H1 (cell line): ENCODE measurements at regions of chr2 and their contacts with region 1.

Region 1: DNA sequence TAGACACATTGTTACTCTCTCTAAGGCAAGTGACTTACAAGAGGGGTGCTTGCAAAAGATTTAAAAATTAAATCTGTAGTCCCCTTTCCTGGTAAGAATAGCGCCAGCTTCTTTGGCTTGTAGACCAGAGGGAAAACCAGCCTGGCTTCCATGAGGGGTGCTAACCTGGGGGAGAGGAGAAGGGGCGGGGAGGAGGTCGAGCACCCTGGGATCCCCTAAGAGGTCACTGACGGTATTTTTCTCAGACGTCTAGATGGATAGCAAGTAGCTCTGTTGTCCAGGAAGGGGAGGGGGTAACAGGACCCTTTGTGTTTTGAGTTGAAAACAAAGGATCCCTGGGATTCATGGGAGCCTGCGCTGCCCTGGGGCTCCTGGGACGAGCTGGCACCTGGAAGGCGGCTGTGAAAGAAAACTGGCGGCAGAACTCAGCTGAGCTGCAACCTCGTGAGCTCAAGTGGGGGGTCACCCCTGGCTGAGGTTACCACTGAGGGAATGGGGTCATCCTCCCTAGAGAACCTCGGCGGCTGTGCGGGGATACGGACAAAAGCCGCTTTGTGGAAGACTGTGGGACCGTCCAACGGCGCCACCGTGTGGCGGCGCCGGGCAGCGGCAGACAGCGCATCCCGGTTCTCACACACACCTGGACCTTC is 37.8 kb upstream of the MRPL19 start:
- DNase-seq: peak; percentile 66 to 89
- H3K4me3 ChIP-seq: peak overlapping the region; percentile 21 to 57 (median 44); a peak in 5 of 8 replicates
- H3K27ac ChIP-seq: no peak overlapping the region
- H3K4me1 ChIP-seq: peaks cover 0 to 4% (median 2%) of the 10 kb centered on the region in 4 experiments; a peak in 4 of 7 replicates
- H3K27me3 ChIP-seq: no peaks in the 10 kb centered on the region; a peak in 2 of 7 replicates
- CTCF ChIP-seq: peak; percentile 90 to 94 (median 92)
- EP300 ChIP-seq: no peak
- POLR2A ChIP-seq: no peak
- RAD21 ChIP-seq: peak; percentile 91 to 93

Region 2: GRCh38 chr2:75157430-75157829 is 451.4 kb before region 1 on chr2:
- CTCF ChIA-PET with region 1: interaction called, 10 read pairs
- POLR2A ChIA-PET with region 1: no interaction called
- DNase-seq: no peak
- H3K4me3 ChIP-seq: no peak overlapping the region
- H3K27ac ChIP-seq: no peak overlapping the region
- H3K4me1 ChIP-seq: peaks cover 4 to 10% (median 4%) of the 10 kb centered on the region in 4 experiments; a peak in 6 of 7 replicates
- H3K27me3 ChIP-seq: no peaks in the 10 kb centered on the region
- CTCF ChIP-seq: peak in 2 of 3 experiments; percentile 30 to 41; a peak in 2 of 4 replicates
- EP300 ChIP-seq: no peak
- POLR2A ChIP-seq: no peak
- RAD21 ChIP-seq: peak; percentile 61 to 64

Region 3: DNA sequence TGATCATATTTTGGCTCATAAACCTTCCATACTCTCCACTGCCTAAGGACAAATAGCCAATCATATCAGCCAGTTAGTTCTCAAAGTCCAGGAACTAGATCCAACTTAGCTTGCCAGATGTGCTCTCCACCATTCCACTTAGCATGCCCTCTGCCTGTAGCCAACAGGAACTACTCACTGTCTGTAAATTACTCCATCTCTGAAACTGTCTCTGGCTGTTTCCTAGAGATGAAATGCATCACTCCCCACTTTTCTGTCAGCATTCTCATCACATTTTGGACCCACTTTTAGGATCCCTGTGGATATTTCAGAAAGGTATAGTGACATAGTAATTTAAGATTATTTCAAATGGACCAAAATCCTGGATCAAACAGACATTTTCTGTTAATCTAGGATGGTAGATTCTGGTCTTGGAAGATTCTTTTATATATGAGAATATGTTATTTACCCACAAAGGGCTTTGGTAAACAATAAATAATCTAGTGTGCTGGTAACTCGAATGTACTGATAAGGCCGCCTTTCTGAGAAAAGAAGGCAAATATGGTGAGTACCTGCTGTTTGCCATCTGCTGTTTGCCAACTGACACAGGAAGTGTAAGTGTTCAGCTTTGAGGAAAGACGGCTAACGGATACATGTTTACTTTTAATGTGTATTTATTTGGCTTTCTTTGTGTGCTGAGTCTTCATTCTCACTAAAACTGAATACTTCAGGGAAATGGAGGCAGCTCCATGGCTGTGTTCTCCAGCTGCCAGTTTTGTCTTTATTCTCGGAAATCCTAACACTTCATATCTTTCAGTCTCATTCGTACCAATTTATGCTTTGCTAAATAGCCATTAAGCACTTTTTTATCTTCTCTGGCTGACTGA is 127.6 kb before region 1 on chr2:
- CTCF ChIA-PET with region 1: interaction called, 11 read pairs
- POLR2A ChIA-PET with region 1: interaction called, 3 read pairs
- DNase-seq: no peak
- H3K4me3 ChIP-seq: no peak overlapping the region
- H3K27ac ChIP-seq: no peak overlapping the region
- H3K4me1 ChIP-seq: peaks cover 0 to 4% (median 0%) of the 10 kb centered on the region in 4 experiments; a peak in 1 of 7 replicates
- H3K27me3 ChIP-seq: no peaks in the 10 kb centered on the region
- CTCF ChIP-seq: peak in 2 of 3 experiments; percentile 33 to 69; a peak in 3 of 4 replicates
- EP300 ChIP-seq: no peak
- POLR2A ChIP-seq: no peak
- RAD21 ChIP-seq: peak; percentile 20 to 47; a peak in 3 of 4 replicates

Region 4: DNA sequence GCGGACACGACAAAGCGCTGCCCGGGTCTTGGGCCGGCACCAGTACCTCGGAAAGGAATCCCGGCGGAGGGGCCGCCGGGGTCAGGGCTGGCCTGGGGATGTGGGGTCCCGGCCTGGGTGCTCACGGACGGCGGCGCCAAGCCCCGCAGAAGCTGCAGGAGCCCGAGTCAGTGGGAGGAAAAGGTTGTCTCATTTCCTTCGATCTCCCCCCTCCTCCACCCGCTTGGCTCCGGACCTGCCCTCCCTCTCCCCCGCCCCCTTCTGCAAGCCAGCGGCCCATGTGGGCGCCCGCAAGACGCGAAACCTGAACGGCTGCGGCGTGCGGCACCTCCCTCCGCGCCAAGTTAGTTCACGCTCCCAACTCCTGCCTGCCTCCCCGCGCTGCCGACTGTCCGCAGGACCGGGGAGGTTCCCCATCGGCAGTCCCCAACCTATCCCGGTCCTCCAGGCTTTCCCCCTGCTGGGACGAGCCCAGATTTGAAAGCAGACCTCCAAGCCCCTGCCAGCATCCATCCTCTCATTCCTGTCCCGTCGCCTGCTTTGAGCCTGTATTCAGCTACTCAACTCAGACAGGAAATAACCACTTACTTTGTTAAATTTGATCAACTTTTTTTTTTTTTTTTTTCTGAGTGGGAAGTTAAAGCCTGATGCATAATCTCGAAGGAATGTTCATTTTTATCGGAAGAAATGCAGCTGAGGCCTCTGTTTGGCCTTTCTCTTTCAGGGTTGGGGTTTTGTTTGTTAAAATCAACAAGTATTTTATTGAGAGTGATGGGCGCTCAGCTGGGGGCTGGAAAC is 47.8 kb before region 1 on chr2 and contains the start of gene EVA1A:
- CTCF ChIA-PET with region 1: interaction called, 17 read pairs
- POLR2A ChIA-PET with region 1: interaction called, 3 read pairs
- DNase-seq: peak in 1 of 2 experiments; percentile 44
- H3K4me3 ChIP-seq: peak within 1 kb of the TSS; percentile 54 to 84 (median 71)
- H3K27ac ChIP-seq: no peak within 1 kb of the TSS
- H3K4me1 ChIP-seq: peaks cover 0 to 5% (median 2%) of the 10 kb centered on the region in 4 experiments; a peak in 4 of 7 replicates
- H3K27me3 ChIP-seq: peaks cover 0 to 25% (median 11%) of the 10 kb centered on the region in 4 experiments; a peak in 5 of 7 replicates
- CTCF ChIP-seq: no peak
- EP300 ChIP-seq: no peak
- POLR2A ChIP-seq: no peak
- RAD21 ChIP-seq: no peak
- total RNA-seq, gene EVA1A: 1.2 and 4.3 TPM in 2 replicates

Region 5: GRCh38 chr2:75579186-75579585 is 29.6 kb before region 1 on chr2:
- CTCF ChIA-PET with region 1: interaction called, 18 read pairs
- POLR2A ChIA-PET with region 1: no interaction called
- DNase-seq: no peak
- H3K4me3 ChIP-seq: no peak overlapping the region
- H3K27ac ChIP-seq: no peak overlapping the region
- H3K4me1 ChIP-seq: no peaks in the 10 kb centered on the region
- H3K27me3 ChIP-seq: no peaks in the 10 kb centered on the region
- CTCF ChIP-seq: no peak
- EP300 ChIP-seq: no peak
- POLR2A ChIP-seq: no peak
- RAD21 ChIP-seq: no peak

Region 6: GRCh38 chr2:75619956-75620740 is 11.3 kb after region 1 on chr2:
- CTCF ChIA-PET with region 1: interaction called, 16 read pairs
- POLR2A ChIA-PET with region 1: interaction called, 4 read pairs
- DNase-seq: no peak
- H3K4me3 ChIP-seq: no peak overlapping the region
- H3K27ac ChIP-seq: no peak overlapping the region
- H3K4me1 ChIP-seq: no peaks in the 10 kb centered on the region
- H3K27me3 ChIP-seq: no peaks in the 10 kb centered on the region
- CTCF ChIP-seq: no peak
- EP300 ChIP-seq: no peak
- POLR2A ChIP-seq: no peak
- RAD21 ChIP-seq: no peak

Region 7: DNA sequence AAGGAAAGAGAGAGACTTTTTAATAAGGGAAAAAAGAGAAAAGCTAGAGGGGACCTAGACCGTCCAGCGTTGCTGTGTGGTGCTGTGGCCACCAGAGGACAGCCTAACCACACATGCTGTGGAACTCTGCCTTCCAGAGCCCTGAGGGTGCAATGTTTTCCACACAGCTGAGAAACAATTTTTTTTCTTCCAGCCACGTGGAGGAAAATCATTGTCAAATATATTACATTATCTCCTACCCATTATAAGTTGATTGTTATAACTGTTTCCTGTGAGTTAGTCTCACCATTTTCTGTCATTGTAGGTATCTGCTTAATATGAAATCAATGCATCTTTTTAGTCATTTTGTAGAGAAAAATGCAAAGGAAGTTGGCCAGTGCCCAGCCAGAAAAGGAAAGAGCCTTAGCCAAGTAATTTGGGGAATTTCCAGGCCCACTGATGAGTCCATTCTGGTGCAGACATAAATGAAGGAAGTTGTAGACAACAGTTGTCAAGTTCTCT is 31.9 kb after region 1 on chr2:
- CTCF ChIA-PET with region 1: interaction called, 13 read pairs
- POLR2A ChIA-PET with region 1: no interaction called
- DNase-seq: peak in 1 of 2 experiments; percentile 72
- H3K4me3 ChIP-seq: no peak overlapping the region
- H3K27ac ChIP-seq: no peak overlapping the region
- H3K4me1 ChIP-seq: no peaks in the 10 kb centered on the region
- H3K27me3 ChIP-seq: peaks cover 0 to 2% (median 0%) of the 10 kb centered on the region in 4 experiments; a peak in 1 of 7 replicates
- CTCF ChIP-seq: peak; percentile 90 to 98 (median 97)
- EP300 ChIP-seq: no peak
- POLR2A ChIP-seq: no peak
- RAD21 ChIP-seq: peak; percentile 91 to 92

Region 8: GRCh38 chr2:75654012-75654411 is 45.2 kb after region 1 on chr2:
- CTCF ChIA-PET with region 1: no interaction called
- POLR2A ChIA-PET with region 1: no interaction called
- DNase-seq: no peak
- H3K4me3 ChIP-seq: no peak overlapping the region
- H3K27ac ChIP-seq: no peak overlapping the region
- H3K4me1 ChIP-seq: no peaks in the 10 kb centered on the region
- H3K27me3 ChIP-seq: no peaks in the 10 kb centered on the region
- CTCF ChIP-seq: peak; percentile 2 to 38 (median 35); a peak in 2 of 4 replicates
- EP300 ChIP-seq: no peak
- POLR2A ChIP-seq: no peak
- RAD21 ChIP-seq: no peak

Region 9: GRCh38 chr2:75729861-75730260 is 121.1 kb after region 1 on chr2:
- CTCF ChIA-PET with region 1: no interaction called
- POLR2A ChIA-PET with region 1: no interaction called
- DNase-seq: no peak
- H3K4me3 ChIP-seq: no peak overlapping the region
- H3K27ac ChIP-seq: no peak overlapping the region
- H3K4me1 ChIP-seq: no peaks in the 10 kb centered on the region
- H3K27me3 ChIP-seq: no peaks in the 10 kb centered on the region
- CTCF ChIP-seq: peak in 2 of 3 experiments; percentile 22 to 25; a peak in 2 of 4 replicates
- EP300 ChIP-seq: no peak
- POLR2A ChIP-seq: no peak
- RAD21 ChIP-seq: peak; percentile 71 to 75